ENCODE measurements at regions of chr11 and their contacts with region 1.

Region 1: GRCh38 chr11:9015677-9016076 is 11.9 kb upstream of the NRIP3 start:
- DNase-seq: no peak
- H3K4me3 ChIP-seq: no peak overlapping the region
- H3K27me3 ChIP-seq: no peaks in the 10 kb centered on the region
- CTCF ChIP-seq: peak; percentile 81

Region 2: GRCh38 chr11:8488395-8488794 is 527.3 kb before region 1 on chr11:
- CTCF ChIA-PET with region 1: no interaction called
- POLR2A ChIA-PET with region 1: no interaction called
- DNase-seq: no peak
- H3K4me3 ChIP-seq: no peak overlapping the region
- H3K27me3 ChIP-seq: no peaks in the 10 kb centered on the region
- CTCF ChIP-seq: no peak

Region 3: DNA sequence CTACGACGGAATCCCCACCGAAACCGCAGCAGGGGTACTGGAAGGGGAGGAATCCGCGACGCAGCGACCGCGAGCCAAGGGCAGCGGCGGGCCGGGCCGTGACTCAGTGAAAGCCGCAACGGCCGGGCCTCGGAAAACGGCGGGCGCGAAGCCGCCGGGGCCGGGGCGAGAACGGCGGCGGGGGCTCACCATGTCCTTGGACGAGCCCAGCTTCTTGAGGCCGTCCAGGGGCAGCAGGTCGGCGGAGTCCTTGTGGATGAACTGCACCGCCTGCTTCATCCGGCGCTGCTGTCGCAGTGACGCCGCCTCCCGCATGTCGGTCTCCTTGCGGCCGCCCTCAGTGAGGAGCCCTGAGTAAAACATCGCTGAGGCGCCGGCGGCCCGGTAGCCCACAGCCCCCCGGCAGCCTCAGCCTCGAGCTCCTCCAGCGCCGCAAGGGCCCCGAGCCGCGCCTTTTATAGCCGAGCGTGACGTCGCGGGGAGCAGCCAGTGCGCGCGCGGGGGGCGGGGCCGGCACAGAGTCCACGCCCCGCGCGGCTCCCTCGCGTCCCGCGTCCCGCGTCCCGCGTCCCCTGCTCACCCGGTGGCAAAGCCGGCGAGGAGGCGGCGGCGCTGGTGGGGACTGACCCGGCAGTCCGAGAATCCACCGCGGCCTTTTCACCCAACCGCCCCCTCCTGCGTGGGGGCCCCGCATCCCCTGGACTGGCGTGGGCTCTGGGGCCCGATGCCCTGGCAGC is 11.9 kb before region 1 on chr11 and contains the start of gene NRIP3:
- CTCF ChIA-PET with region 1: interaction called, 18 read pairs
- POLR2A ChIA-PET with region 1: no interaction called
- DNase-seq: no peak
- H3K4me3 ChIP-seq: peak within 1 kb of the TSS; percentile 50
- H3K27me3 ChIP-seq: peaks cover 7% of the 10 kb centered on the region
- CTCF ChIP-seq: no peak
- polyA plus RNA-seq, gene NRIP3: 4.7 and 7.1 TPM in 2 replicates

Region 4: DNA sequence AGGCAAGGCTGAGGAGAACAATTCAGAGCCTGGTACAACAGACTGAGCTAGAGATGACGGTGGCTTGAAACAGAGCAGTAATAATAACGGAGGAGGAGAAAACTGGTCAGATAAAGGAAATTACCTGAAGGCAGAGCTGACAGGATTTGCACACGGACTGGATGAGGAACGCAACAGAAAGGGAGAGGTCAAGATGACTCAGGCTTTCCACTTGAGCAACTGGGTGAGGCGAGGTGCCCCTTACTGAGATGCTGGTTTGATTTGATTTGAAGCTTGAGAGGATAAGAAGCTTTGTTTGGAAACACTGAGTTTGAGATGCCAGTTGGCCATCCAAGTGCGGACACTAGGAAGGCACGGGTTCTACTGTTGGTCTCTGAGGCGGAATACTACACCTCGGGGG is 23.5 kb after region 1 on chr11:
- CTCF ChIA-PET with region 1: interaction called, 19 read pairs
- POLR2A ChIA-PET with region 1: no interaction called
- DNase-seq: no peak
- H3K4me3 ChIP-seq: no peak overlapping the region
- H3K27me3 ChIP-seq: no peaks in the 10 kb centered on the region
- CTCF ChIP-seq: no peak

Region 5: DNA sequence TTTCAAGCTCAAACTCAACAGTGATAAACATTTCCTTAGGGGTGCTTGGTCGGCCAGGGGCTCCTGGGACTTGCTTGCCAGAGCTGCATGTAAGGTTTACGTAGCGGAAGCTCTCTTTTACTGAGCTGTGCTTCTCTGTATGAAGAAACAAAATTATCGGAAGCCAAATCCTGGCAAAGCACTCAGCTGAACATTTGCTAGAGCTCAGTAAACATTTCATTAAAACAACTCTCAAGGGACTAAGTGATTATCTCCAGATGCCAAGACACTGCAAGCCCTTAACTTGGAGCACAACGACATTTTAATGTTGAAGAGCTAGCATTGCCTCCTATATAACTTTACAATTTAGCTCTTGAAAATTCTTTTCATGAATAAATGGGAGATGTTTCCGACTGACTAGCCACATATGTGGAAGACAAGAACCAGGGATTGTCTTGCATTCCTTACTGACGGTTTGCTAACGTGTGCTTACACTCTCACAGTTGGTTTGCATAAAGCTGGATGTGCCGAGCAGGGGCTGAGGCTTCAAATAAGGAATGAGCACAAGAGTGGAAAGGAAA is 32.4 kb after region 1 on chr11:
- CTCF ChIA-PET with region 1: interaction called, 14 read pairs
- POLR2A ChIA-PET with region 1: no interaction called
- DNase-seq: peak; percentile 23
- H3K4me3 ChIP-seq: no peak overlapping the region
- H3K27me3 ChIP-seq: no peaks in the 10 kb centered on the region
- CTCF ChIP-seq: no peak

Region 6: DNA sequence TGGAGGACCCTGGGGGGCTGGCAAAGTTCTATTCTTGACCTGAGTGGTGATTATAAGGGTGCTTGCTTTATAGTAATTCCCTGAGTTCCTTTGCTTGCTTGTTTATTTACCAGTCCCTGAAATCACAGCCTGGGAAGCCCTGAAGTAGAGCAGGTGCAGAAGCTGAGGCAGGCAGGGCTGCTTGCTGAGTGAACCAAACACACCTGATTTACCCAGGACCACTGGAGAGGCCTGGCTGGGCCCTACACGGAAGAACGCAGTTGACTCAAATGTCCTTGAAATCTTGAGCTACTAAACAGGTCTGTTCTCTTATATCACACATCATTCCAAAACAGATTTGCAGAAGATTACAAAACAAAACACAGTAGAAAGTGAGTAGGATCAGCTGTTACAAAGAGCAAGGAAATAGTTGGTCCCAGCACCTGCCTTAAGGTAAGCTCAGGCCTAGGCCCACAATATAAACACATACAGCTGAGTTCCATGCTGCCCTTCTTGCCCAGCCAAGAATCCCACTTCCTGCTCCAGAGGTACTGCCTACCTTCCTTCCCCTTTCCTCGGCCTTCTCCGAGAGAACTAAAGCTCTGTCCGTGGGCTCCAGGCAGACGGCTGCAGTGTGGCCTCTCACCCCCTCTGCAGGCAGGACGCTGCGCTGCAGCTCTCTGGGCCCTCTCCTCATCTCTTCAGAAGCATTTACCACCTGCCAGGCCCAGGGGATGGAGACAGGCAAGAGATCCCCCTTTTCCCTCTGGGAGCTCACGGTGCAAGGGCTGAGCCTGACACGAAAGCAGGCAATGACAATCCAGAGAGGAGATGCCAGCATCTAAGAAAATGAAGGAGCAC is 121.8 kb after region 1 on chr11:
- CTCF ChIA-PET with region 1: interaction called, 88 read pairs
- POLR2A ChIA-PET with region 1: no interaction called
- DNase-seq: no peak
- H3K4me3 ChIP-seq: no peak overlapping the region
- H3K27me3 ChIP-seq: no peaks in the 10 kb centered on the region
- CTCF ChIP-seq: peak; percentile 99

Region 7: DNA sequence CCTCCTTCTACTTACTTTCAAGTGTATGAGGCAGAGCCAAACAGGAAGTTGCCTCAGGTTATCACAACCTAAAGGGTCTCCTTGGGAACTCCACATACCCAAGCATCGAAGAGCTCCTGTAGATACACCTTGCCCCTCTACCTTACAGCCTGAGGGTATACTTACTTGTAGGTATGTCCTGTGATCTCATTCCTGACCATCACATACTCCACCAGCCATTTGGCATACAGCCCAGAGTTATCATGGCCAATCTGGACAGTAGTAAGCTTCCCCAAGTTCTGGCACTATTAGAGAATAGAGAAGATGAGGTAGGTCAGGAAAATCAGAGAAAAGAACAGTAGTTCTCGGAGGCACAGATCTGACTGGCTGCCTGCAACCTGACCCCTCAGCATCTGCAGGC is 129.2 kb after region 1 on chr11:
- CTCF ChIA-PET with region 1: interaction called, 88 read pairs
- POLR2A ChIA-PET with region 1: no interaction called
- DNase-seq: no peak
- H3K4me3 ChIP-seq: no peak overlapping the region
- H3K27me3 ChIP-seq: no peaks in the 10 kb centered on the region
- CTCF ChIP-seq: no peak

Region 8: DNA sequence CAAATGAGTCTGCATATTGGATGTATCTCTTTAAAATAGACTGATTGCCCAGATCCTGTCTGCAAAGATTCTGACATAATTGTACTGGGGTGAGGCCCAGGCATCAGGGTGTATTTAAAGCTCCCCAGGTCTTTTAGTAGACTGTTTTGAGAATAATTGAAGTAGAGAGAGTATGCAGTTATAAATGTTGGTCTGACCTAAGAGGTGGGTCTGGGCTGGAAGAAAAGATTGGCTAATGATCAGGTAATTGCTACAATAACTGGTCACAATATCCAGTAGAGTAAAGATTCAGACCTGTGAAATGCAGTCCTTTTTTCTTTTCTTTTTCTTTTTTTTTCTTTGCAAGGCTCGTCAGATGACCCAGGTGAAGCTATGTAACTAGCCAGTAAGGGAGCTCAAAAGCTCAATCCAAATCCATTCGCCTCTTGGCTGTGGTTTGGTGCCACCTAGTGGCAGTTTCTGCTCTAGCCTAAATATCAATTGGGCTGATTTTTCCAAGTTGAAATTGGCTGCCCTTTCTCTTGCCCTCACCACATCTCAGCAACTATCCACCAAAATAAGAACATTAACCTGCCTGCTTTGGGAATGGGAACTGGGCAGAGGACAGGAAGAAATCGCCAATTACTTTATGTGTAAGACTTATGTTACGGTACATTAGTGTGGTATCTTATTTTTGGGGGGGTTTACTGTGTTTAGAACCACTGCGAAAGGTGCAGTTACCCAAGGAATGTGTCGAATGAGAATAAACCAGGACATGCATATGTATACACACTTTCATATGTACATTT is 491.0 kb after region 1 on chr11:
- CTCF ChIA-PET with region 1: interaction called, 16 read pairs
- POLR2A ChIA-PET with region 1: no interaction called
- DNase-seq: no peak
- H3K4me3 ChIP-seq: no peak overlapping the region
- H3K27me3 ChIP-seq: no peaks in the 10 kb centered on the region
- CTCF ChIP-seq: peak; percentile 86

Measured in BJ (cell line).